ENCODE measurements at regions of chr2 and their contacts with region 1.

Region 1: DNA sequence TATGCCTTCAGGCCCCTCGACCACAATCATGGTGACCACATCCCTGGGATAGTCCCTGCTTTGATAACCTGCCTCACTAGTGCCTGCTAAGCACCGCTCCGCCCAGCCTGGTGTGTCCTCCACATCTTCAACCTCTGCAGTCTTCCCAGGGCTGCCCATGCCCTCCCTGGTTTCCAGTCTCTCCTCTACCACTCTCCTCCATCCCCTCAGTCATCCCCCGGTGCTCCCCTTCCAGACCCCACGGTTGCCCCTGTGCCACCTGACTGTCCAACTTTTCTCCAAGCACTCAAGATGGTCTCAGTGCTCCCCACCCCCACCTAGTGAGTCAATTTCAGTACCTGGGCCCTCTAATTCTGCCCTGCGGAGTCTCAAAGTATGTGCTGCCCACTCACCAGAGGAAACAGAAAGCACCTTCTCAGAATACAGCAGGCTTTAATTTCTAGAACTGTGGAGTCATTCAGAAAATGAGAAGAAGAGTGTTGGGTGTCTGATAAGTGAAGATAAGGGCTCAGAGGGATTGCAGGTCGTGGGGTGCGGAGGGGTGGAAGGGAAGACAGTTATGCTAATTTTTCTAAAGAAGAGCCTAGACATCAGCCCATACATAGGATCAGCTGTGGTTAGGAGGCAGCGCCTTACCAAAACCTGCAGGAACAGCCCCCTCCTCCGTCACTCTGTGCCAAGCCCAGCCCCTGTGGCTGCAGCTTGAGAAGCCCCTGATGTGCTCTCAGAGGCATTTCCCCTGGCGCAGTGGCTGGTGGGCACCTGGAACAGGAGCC is 53.6 kb upstream of the CAB39 start:
- DNase-seq: peak; percentile 80
- H3K4me3 Mint-ChIP-seq: peak overlapping the region; percentile 78
- H3K27ac Mint-ChIP-seq: peak overlapping the region; percentile 91
- H3K4me1 Mint-ChIP-seq: peaks cover 91% of the 10 kb centered on the region
- H3K27me3 Mint-ChIP-seq: no peaks in the 10 kb centered on the region

Region 2: GRCh38 chr2:230619466-230619865 is 39.6 kb before region 1 on chr2:
- CTCF ChIA-PET with region 1: no interaction called
- POLR2A ChIA-PET with region 1: no interaction called
- DNase-seq: no peak
- H3K4me3 Mint-ChIP-seq: no peak overlapping the region
- H3K27ac Mint-ChIP-seq: no peak overlapping the region
- H3K4me1 Mint-ChIP-seq: peaks cover 26% of the 10 kb centered on the region
- H3K27me3 Mint-ChIP-seq: no peaks in the 10 kb centered on the region

Region 3: GRCh38 chr2:230643576-230644291 is 15.3 kb before region 1 on chr2:
- CTCF ChIA-PET with region 1: interaction called, 23 read pairs
- POLR2A ChIA-PET with region 1: interaction called, 5 read pairs
- DNase-seq: peak; percentile 58
- H3K4me3 Mint-ChIP-seq: peak overlapping the region; percentile 21
- H3K27ac Mint-ChIP-seq: peak overlapping the region; percentile 95
- H3K4me1 Mint-ChIP-seq: peaks cover 34% of the 10 kb centered on the region
- H3K27me3 Mint-ChIP-seq: no peaks in the 10 kb centered on the region